ENCODE measurements at regions of chr12 and their contacts with region 1.

Region 1: GRCh38 chr12:12008931-12009611 is 61.7 kb upstream of the BCL2L14 start:
- DNase-seq: peak; percentile 56
- H3K4me3 Mint-ChIP-seq: peak overlapping the region; percentile 73
- H3K27ac Mint-ChIP-seq: peak overlapping the region; percentile 97
- H3K4me1 Mint-ChIP-seq: peaks cover 88% of the 10 kb centered on the region
- H3K27me3 Mint-ChIP-seq: peaks cover 1% of the 10 kb centered on the region

Region 2: DNA sequence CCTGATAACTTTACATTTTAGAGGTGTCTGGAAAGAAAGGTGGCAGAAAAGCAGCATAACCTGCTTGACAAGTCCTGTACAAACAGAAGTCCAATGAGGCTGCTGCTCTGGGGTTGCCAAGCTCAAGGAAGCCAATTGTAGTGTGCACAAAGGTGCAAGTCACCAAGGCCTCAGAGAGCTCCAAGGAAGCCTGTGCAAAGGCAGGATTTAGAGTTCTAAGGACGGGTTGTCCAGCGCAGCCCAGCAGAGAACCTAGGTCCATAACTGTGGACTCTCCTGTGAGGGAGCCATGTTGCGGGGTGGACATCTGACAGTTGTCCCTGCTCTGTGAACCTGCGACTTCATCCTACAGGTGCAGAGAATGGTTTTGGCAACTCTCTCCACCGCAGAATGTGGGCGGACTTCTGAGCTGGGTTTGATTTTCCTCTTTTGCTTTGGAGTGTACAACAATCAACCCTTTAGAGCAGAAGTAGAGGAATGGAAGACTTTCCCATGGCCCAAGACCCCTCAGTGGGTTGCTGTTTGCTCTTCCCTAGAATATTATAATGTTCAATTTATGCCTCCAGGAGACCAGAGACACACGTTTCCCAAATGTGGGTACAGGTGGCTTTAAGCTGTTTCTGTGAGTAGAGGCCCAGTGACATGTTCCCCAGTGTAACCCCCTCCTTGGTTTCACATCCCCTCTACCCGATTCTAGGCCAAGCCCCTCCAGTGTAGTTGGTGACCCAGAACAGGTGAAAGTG is 278.6 kb before region 1 on chr12:
- intact Hi-C with region 1: loop called (anchors 1 kb)
- DNase-seq: no peak
- H3K4me3 Mint-ChIP-seq: peak overlapping the region; percentile 66
- H3K27ac Mint-ChIP-seq: peak overlapping the region; percentile 86
- H3K4me1 Mint-ChIP-seq: peaks cover 93% of the 10 kb centered on the region
- H3K27me3 Mint-ChIP-seq: no peaks in the 10 kb centered on the region

Region 3: GRCh38 chr12:11798856-11799501 is 210.1 kb before region 1 on chr12:
- intact Hi-C with region 1: no loop called
- DNase-seq: no peak
- H3K4me3 Mint-ChIP-seq: peak overlapping the region; percentile 24
- H3K27ac Mint-ChIP-seq: peak overlapping the region; percentile 78
- H3K4me1 Mint-ChIP-seq: peaks cover 73% of the 10 kb centered on the region
- H3K27me3 Mint-ChIP-seq: no peaks in the 10 kb centered on the region

Region 4: DNA sequence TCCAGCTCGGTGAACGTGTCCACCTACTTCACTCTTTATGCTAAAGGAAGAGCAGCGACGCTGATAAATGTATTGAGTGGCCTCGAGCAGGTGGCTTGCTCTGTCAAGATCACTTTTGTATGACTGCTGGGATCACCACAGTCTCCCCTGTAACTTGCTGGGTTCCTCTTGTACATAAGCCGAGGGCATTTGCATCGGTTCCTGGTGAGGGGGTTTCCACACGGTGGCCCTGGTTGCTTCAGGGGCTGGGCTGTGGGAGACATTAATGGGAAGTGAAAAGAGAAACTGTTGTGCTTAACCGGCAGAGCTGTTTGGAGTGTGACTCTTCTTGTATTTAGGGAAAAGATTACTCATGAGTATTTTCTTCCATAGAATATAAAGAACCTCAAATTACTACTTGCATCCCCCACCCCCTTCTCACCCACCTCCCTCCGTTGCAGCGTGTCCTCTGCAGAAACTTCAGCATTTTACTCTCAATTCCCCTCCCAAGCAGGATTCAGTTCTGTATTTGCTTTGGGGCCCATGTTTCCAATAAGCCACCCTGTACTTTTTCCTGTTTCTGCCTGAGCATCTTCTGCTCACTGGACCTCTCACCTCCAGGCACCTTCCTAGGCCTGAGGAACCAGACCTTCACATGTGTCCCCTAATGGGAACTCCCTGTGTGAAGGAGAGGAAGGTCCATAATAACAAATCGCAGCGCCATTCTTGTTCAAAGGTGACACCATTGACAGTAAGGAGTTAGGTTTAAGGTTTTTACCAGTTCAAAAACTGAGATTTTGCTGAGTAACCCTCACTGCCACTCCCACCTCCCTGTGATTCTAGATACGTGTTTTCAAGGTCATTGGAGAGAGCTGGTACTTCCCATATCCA is 172.6 kb before region 1 on chr12:
- intact Hi-C with region 1: loop called (anchors 1 kb)
- DNase-seq: peak; percentile 53
- H3K4me3 Mint-ChIP-seq: peak overlapping the region; percentile 67
- H3K27ac Mint-ChIP-seq: peak overlapping the region; percentile 94
- H3K4me1 Mint-ChIP-seq: peaks cover 91% of the 10 kb centered on the region
- H3K27me3 Mint-ChIP-seq: no peaks in the 10 kb centered on the region

Region 5: DNA sequence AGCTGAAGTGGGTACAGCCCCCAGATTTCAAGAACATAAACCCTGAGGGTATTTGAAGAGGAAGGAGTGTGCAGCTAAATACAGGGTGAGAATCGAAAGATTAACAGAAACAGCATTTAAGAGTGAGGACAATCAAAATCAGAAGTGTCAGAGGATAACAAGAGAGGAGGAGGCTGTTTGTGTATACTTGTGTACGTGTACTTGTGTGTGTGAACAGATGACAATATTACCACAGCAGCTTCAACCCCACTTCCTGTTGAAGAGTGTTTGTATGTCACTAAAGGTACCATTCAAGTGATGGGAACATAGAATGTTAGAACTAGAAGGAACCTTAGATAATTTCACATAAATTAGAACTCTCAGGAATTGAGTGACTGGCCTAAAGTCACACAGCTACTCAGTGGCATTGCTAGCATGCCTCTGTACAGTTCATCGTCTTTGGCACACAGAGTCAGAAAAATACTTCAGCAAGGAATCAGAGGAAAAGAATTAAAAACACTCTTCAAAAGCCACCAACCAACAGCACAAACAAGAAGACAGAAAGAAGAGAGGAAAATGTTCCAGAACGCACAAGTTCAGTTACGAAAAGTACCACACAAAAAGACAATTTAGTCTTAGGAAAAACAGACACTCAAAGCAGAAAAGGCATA is 102.7 kb before region 1 on chr12:
- intact Hi-C with region 1: loop called (anchors 1 kb)
- DNase-seq: no peak
- H3K4me3 Mint-ChIP-seq: peak overlapping the region; percentile 30
- H3K27ac Mint-ChIP-seq: peak overlapping the region; percentile 88
- H3K4me1 Mint-ChIP-seq: peaks cover 53% of the 10 kb centered on the region
- H3K27me3 Mint-ChIP-seq: no peaks in the 10 kb centered on the region

Region 6: GRCh38 chr12:12024911-12025682 is 16.0 kb after region 1 on chr12:
- intact Hi-C with region 1: loop called (anchors 1 kb)
- DNase-seq: peak; percentile 59
- H3K4me3 Mint-ChIP-seq: peak overlapping the region; percentile 32
- H3K27ac Mint-ChIP-seq: peak overlapping the region; percentile 85
- H3K4me1 Mint-ChIP-seq: peaks cover 91% of the 10 kb centered on the region
- H3K27me3 Mint-ChIP-seq: no peaks in the 10 kb centered on the region

Region 7: GRCh38 chr12:12171991-12172521 is 163.0 kb after region 1 on chr12:
- intact Hi-C with region 1: loop called (anchors 1 kb)
- DNase-seq: peak; percentile 12
- H3K4me3 Mint-ChIP-seq: no peak overlapping the region
- H3K27ac Mint-ChIP-seq: peak overlapping the region; percentile 42
- H3K4me1 Mint-ChIP-seq: peaks cover 15% of the 10 kb centered on the region
- H3K27me3 Mint-ChIP-seq: peaks cover 60% of the 10 kb centered on the region

Region 8: DNA sequence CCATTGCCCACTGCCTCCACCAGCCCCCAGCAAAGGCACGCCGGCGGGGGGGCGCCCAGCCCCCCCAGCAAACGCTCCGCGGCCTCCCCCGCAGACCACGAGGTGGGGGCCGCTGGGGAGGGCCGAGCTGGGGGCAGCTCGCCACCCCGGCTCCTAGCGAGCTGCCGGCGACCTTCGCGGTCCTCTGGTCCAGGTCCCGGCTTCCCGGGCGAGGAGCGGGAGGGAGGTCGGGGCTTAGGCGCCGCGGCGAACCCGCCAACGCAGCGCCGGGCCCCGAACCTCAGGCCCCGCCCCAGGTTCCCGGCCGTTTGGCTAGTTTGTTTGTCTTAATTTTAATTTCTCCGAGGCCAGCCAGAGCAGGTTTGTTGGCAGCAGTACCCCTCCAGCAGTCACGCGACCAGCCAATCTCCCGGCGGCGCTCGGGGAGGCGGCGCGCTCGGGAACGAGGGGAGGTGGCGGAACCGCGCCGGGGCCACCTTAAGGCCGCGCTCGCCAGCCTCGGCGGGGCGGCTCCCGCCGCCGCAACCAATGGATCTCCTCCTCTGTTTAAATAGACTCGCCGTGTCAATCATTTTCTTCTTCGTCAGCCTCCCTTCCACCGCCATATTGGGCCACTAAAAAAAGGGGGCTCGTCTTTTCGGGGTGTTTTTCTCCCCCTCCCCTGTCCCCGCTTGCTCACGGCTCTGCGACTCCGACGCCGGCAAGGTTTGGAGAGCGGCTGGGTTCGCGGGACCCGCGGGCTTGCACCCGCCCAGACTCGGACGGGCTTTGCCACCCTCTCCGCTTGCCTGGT is 707.9 kb after region 1 on chr12 and contains the start of gene CDKN1B:
- intact Hi-C with region 1: loop called (anchors 2 kb)
- DNase-seq: peak; percentile 77
- H3K4me3 Mint-ChIP-seq: peak within 1 kb of the TSS; percentile 98
- H3K27ac Mint-ChIP-seq: peak within 1 kb of the TSS; percentile 99
- H3K4me1 Mint-ChIP-seq: peaks cover 71% of the 10 kb centered on the region
- H3K27me3 Mint-ChIP-seq: no peaks in the 10 kb centered on the region
- total RNA-seq, gene CDKN1B: 54.8 and 61.9 TPM in 2 replicates

Measured in activated T-helper 1 cell treated with anti-CD3 and anti-CD28 coated beads, Interleukin-12 subunit alpha, Interleukin-12 subunit beta, Interleukin-2, Interleukin-4 antibody, amounts not matched to agents 30 ng/mL and 10 ng/mL and 1 ng/mL, durations not matched to agents 14 hours and 24 hours and 36 hours (primary cell).